Calu3 (cell line): ENCODE measurements at regions of chr5 and their contacts with region 1.

Region 1: GRCh38 chr5:132829742-132830435 is 558 bp downstream of the SHROOM1 start:
- DNase-seq: peak; percentile 93
- H3K4me3 Mint-ChIP-seq: peak overlapping the region; percentile 95
- H3K27ac Mint-ChIP-seq: peak overlapping the region; percentile 78
- H3K4me1 Mint-ChIP-seq: peaks cover 19% of the 10 kb centered on the region
- H3K27me3 Mint-ChIP-seq: no peaks in the 10 kb centered on the region
- CTCF ChIP-seq: peak; percentile 91

Region 2: GRCh38 chr5:132883261-132883834 is 53.5 kb after region 1 on chr5:
- CTCF ChIA-PET with region 1: interaction called, 23 read pairs
- intact Hi-C with region 1: loop called (anchors 2 kb)
- DNase-seq: peak; percentile 60
- H3K4me3 Mint-ChIP-seq: no peak overlapping the region
- H3K27ac Mint-ChIP-seq: peak overlapping the region; percentile 44
- H3K4me1 Mint-ChIP-seq: peaks cover 4% of the 10 kb centered on the region
- H3K27me3 Mint-ChIP-seq: no peaks in the 10 kb centered on the region
- CTCF ChIP-seq: peak; percentile 71